RWPE1 (cell line): ENCODE measurements at regions of chr1 and their contacts with region 1.

Region 1: DNA sequence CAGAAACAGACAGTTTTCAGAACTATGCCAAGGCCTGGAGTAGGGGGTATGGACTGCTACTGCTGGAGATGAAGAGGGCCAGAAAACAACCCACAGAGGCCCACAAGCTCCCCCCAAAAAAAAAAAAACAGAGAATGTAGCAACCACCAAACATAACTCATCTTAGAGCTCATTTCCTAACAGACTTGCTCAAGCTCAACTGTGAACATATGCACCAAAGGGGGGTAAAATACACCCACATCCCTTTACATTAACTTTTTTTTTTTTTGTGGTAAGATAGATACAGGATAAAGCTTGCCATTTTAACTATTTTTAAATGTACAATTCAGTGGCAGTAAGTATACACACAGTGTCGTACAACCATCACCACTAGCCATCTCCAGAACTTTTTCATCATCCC is 36.0 kb downstream of the SEC16B start:
- DNase-seq: no peak
- H3K27ac ChIP-seq: no peak overlapping the region
- CTCF ChIP-seq: no peak

Region 2: DNA sequence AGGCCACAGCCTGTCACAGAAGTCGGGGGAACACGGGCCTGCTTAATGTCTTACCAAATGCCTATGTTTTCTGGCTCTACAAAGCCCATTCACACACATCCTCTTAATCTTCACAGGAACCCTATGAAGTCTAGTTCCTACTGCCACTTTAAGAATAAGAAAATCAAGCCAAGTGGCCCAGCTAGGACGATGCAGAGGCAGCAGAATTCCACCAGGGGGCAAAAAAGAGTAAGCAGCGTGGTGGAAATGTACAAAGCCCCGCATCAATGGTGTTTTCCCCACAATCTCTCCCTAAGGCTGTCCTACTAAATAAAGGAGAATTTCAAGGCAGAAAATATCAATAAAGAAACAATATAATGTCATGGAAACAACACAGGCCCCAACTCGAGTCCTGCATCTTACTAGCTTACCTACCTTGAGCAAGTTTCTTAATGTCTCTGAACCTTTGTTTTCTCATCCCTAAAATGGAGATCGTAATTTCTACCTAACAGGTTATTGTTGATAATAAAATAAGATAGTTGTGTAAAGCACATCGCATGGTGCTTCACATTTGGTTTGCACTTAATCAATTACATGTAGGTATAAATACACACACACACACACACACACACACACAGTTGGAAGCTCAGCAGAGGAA is 14.6 kb after region 1 on chr1:
- CTCF ChIA-PET with region 1: interaction called, 11 read pairs
- POLR2A ChIA-PET with region 1: no interaction called
- DNase-seq: peak; percentile 69
- H3K27ac ChIP-seq: no peak overlapping the region
- CTCF ChIP-seq: peak; percentile 94

Region 3: DNA sequence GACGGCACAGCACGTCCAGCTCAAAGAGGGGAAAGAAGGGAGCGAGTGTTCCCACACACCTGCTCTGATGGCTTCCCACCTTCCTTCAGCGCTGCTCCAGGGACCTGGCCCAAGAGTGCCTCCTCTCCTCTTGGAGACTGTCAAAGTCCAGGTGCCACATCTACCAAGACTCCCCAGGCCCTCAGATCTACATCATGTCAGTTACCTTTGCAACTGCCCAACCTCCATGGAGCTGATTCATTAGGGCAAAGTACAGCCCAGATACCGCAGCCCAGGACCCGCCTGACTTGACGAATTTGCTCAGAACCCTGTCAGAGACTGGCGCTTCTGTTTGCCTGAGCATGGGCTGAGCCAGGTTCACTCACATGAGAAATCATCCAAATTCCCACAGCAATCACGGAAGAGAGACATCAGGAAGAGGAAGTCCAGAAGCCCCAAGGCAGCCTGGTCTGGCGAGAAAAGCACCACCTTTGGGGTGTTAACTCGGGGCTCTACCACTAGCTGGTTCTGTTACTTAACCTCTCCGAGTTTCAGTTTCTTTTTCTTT is 36.0 kb after region 1 on chr1 and contains the start of gene SEC16B:
- CTCF ChIA-PET with region 1: no interaction called
- POLR2A ChIA-PET with region 1: no interaction called
- DNase-seq: no peak
- H3K27ac ChIP-seq: no peak within 1 kb of the TSS
- CTCF ChIP-seq: no peak